B cell (primary cell): ENCODE measurements at regions of chr19 and their contacts with region 1.

Region 1: GRCh38 chr19:46840136-46840942 is 10.3 kb downstream of the AP2S1 start:
- DNase-seq: peak; percentile 82
- ATAC-seq: peak; percentile 95
- H3K4me3 ChIP-seq: no peak overlapping the region
- H3K4me3 Mint-ChIP-seq: no peak overlapping the region
- H3K27ac ChIP-seq: no peak overlapping the region
- H3K27ac Mint-ChIP-seq: no peak overlapping the region
- H3K4me1 ChIP-seq: peaks cover 0 to 6% of the 10 kb centered on the region in 2 donors
- H3K4me1 Mint-ChIP-seq: peaks cover 3% of the 10 kb centered on the region
- H3K27me3 ChIP-seq: no peaks in the 10 kb centered on the region
- H3K27me3 Mint-ChIP-seq: no peaks in the 10 kb centered on the region
- CTCF ChIP-seq: peak; percentile 85

Region 2: GRCh38 chr19:46536391-46536790 is 303.9 kb before region 1 on chr19:
- CTCF ChIA-PET with region 1: no interaction called
- POLR2A ChIA-PET with region 1: no interaction called
- intact Hi-C with region 1: no loop called
- DNase-seq: no peak
- ATAC-seq: no peak
- H3K4me3 ChIP-seq: no peak overlapping the region
- H3K4me3 Mint-ChIP-seq: no peak overlapping the region
- H3K27ac ChIP-seq: no peak overlapping the region
- H3K27ac Mint-ChIP-seq: no peak overlapping the region
- H3K4me1 ChIP-seq: no peaks in the 10 kb centered on the region
- H3K4me1 Mint-ChIP-seq: no peaks in the 10 kb centered on the region
- H3K27me3 ChIP-seq: peaks cover 0 to 4% (median 0%) of the 10 kb centered on the region in 4 experiments
- H3K27me3 Mint-ChIP-seq: peaks cover 4% of the 10 kb centered on the region
- CTCF ChIP-seq: no peak

Region 3: GRCh38 chr19:46704379-46705076 is 135.8 kb before region 1 on chr19:
- CTCF ChIA-PET with region 1: interaction called, 18 read pairs
- POLR2A ChIA-PET with region 1: no interaction called
- intact Hi-C with region 1: no loop called
- DNase-seq: peak; percentile 85
- ATAC-seq: peak; percentile 93
- H3K4me3 ChIP-seq: no peak overlapping the region
- H3K4me3 Mint-ChIP-seq: no peak overlapping the region
- H3K27ac ChIP-seq: peak overlapping the region in 1 of 2 donors; percentile 48
- H3K27ac Mint-ChIP-seq: peak overlapping the region; percentile 87
- H3K4me1 ChIP-seq: peaks cover 3 to 8% of the 10 kb centered on the region in 2 donors
- H3K4me1 Mint-ChIP-seq: peaks cover 13% of the 10 kb centered on the region
- H3K27me3 ChIP-seq: no peaks in the 10 kb centered on the region
- H3K27me3 Mint-ChIP-seq: no peaks in the 10 kb centered on the region
- CTCF ChIP-seq: peak; percentile 93

Region 4: DNA sequence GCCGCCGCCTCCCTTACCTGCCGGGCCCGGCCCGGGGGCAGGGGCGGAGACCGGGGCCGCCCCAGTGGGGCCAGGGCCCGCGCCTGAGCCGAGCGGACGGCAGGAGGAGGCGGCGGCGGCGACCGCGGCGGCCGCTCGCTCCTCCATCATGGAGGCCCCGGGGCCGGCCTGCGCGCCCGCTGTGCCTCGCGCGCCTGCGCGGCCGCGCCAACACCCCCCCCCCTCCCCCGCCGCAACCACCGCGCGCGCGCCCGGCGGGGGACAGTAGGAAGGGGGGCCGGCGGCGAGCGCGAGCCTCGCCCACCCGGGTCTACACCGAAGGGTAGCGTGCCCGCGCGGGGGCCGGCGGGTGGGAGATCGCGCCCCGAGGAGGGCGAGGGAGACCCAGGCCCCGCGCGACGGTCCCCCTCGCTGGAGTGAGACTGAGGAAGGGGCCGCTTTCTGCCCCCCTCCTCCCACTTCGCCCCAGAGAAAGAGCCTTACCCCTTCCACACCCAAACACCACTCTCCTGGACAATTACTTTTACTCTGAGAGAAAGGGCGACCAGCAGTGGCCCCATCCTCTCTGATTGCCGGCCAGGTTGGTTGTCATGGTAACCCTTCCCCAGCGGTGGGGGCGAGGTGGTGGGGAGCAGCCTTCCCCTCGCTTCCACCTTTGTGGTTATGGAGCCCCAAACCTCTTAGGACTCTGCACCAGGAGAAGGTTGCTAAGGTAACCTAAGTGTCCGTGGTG is 93.9 kb before region 1 on chr19 and contains the start of gene STRN4:
- CTCF ChIA-PET with region 1: interaction called, 51 read pairs
- POLR2A ChIA-PET with region 1: no interaction called
- intact Hi-C with region 1: no loop called
- DNase-seq: peak; percentile 82
- ATAC-seq: peak; percentile 78
- H3K4me3 ChIP-seq: peak within 1 kb of the TSS; percentile 51 to 87 (median 84)
- H3K4me3 Mint-ChIP-seq: peak within 1 kb of the TSS; percentile 93
- H3K27ac ChIP-seq: peak within 1 kb of the TSS; percentile 43 to 77
- H3K27ac Mint-ChIP-seq: peak within 1 kb of the TSS; percentile 85
- H3K4me1 ChIP-seq: peaks cover 15 to 43% of the 10 kb centered on the region in 2 donors
- H3K4me1 Mint-ChIP-seq: peaks cover 58% of the 10 kb centered on the region
- H3K27me3 ChIP-seq: no peaks in the 10 kb centered on the region
- H3K27me3 Mint-ChIP-seq: no peaks in the 10 kb centered on the region
- CTCF ChIP-seq: no peak
- total RNA-seq, gene STRN4: 102 and 112 TPM in 2 replicates

Region 5: GRCh38 chr19:46766569-46767317 is 73.6 kb before region 1 on chr19:
- CTCF ChIA-PET with region 1: interaction called, 54 read pairs
- POLR2A ChIA-PET with region 1: interaction called, 6 read pairs
- intact Hi-C with region 1: no loop called
- DNase-seq: peak; percentile 67
- ATAC-seq: peak; percentile 64
- H3K4me3 ChIP-seq: no peak overlapping the region
- H3K4me3 Mint-ChIP-seq: no peak overlapping the region
- H3K27ac ChIP-seq: no peak overlapping the region
- H3K27ac Mint-ChIP-seq: no peak overlapping the region
- H3K4me1 ChIP-seq: no peaks in the 10 kb centered on the region
- H3K4me1 Mint-ChIP-seq: peaks cover 2% of the 10 kb centered on the region
- H3K27me3 ChIP-seq: no peaks in the 10 kb centered on the region
- H3K27me3 Mint-ChIP-seq: no peaks in the 10 kb centered on the region
- CTCF ChIP-seq: peak; percentile 72

Region 6: DNA sequence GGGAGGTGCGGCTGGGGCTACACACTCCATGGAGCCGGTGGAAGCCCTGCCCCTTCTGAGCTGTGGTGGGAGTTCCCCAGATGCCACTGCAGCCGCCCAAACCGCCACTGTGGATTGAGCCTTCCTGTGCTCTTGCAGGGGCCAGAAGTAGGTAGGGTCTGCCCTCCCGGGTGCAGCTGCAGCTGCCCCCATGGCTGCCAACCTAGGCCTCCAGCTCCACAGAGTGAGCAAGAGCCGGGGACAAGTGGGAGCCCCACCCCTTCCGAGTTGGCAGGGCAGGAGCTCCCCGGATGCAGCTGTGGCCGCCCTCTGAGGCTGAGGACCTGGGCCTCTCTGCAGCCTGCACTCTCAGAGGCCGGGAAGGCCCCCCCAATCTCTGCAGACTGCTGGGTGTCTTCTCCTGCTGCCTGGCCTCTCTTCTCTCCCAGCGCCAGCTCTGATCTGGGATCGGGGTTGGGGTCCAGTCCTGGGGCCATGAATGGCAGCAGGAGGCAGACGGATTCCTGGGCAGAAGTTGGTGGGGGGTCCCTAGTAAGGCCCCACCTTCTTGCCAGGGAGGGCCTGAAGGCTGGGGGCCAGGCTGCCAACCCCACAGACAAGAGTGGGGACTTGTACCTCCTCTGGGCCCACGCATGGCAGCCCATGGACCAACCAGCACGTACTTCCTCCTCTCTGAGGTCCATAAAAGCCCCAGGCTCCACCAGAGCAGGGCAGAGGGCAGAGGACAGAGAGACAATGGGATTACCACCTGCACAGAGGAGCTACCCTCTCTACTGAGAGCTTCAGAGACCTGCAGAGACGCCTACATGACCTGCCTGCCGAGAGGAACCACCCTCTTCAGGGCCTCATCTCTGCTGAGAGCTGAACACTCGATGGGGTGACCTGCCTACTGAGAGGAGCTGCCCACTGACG is 18.6 kb before region 1 on chr19:
- CTCF ChIA-PET with region 1: interaction called, 56 read pairs
- POLR2A ChIA-PET with region 1: interaction called, 8 read pairs
- intact Hi-C with region 1: loop called (anchors 2 kb)
- DNase-seq: peak; percentile 85
- ATAC-seq: peak; percentile 66
- H3K4me3 ChIP-seq: peak overlapping the region in 3 of 5 experiments; percentile 23 to 51 (median 29)
- H3K4me3 Mint-ChIP-seq: peak overlapping the region; percentile 69
- H3K27ac ChIP-seq: peak overlapping the region; percentile 79
- H3K27ac Mint-ChIP-seq: peak overlapping the region; percentile 92
- H3K4me1 ChIP-seq: peaks cover 60 to 73% of the 10 kb centered on the region in 2 donors
- H3K4me1 Mint-ChIP-seq: peaks cover 52% of the 10 kb centered on the region
- H3K27me3 ChIP-seq: no peaks in the 10 kb centered on the region
- H3K27me3 Mint-ChIP-seq: no peaks in the 10 kb centered on the region
- CTCF ChIP-seq: no peak

Region 7: DNA sequence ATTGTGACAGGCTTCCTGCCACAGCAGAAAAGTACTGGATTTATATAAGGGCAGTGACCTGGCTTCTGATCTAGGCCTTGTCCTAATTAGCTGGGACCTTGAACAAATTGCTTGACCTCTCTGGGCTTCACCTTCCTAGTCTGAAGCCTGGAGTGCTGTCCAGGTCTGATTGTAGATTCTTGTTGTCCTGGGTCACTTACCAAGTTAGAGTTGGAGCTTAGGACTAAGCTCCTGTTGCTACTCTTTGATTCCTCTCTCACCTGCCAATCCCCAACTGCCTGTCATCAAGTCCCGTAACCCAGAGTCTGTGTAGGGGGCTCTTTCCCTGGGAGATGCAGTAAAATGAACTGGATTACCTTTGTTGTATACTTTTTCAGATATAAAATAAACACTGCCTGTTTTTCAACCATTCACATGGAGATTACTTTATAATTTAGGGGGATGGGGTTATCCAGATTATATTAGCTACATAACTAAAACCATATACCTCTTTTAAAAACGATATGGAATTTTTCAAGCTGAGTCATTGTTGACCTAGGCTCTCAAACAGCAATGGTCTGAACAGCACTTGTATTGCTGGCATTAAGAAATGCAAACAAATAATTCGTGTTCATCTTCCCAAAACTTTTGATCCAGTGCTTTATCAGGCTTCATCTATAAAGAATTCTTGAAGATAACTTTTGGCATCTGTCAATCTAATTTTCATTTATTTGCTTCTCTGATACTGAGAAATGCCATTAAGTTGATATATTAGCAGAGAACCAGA is 26.2 kb after region 1 on chr19:
- CTCF ChIA-PET with region 1: no interaction called
- POLR2A ChIA-PET with region 1: no interaction called
- intact Hi-C with region 1: no loop called
- DNase-seq: no peak
- ATAC-seq: no peak
- H3K4me3 ChIP-seq: no peak overlapping the region
- H3K4me3 Mint-ChIP-seq: no peak overlapping the region
- H3K27ac ChIP-seq: no peak overlapping the region
- H3K27ac Mint-ChIP-seq: peak overlapping the region; percentile 22
- H3K4me1 ChIP-seq: peaks cover 19 to 25% of the 10 kb centered on the region in 2 donors
- H3K4me1 Mint-ChIP-seq: peaks cover 29% of the 10 kb centered on the region
- H3K27me3 ChIP-seq: no peaks in the 10 kb centered on the region
- H3K27me3 Mint-ChIP-seq: no peaks in the 10 kb centered on the region
- CTCF ChIP-seq: no peak

Region 8: DNA sequence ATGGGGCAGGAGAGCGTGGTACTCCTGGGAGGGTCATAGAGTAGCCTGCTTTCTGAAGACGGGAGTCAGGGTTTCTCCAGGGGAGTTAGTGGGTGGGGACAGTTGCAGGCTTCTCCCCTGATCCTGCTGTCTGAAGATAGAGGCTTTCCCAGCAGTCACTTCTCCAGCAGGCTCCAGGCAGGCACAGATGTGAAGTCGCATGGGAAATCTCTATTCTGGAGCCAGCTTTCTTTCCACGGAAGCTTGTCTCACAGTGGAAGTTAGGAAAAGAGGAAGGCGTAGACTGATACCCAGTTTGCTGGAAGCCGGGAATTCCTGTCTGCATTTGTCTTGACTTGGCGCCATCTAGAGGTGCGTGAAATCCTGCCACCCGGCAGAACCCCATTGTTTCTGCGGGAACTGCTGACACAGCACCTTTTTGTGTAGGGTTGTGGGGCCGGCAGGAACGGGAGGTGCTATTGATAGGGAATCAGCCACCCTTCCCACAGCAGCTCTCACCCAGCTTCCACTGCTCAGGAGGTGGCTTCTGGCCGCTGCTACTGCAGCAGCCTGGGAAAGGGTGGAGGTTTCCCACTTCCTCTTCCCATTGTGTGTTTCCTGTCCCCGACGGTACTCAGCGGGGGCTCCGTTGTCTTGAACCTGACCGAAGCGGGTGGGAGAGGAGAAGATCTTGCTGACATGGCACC is 150.8 kb after region 1 on chr19:
- CTCF ChIA-PET with region 1: interaction called, 13 read pairs
- POLR2A ChIA-PET with region 1: no interaction called
- intact Hi-C with region 1: no loop called
- DNase-seq: peak; percentile 51
- ATAC-seq: no peak
- H3K4me3 ChIP-seq: no peak overlapping the region
- H3K4me3 Mint-ChIP-seq: no peak overlapping the region
- H3K27ac ChIP-seq: no peak overlapping the region
- H3K27ac Mint-ChIP-seq: no peak overlapping the region
- H3K4me1 ChIP-seq: peaks cover 6 to 8% of the 10 kb centered on the region in 2 donors
- H3K4me1 Mint-ChIP-seq: peaks cover 10% of the 10 kb centered on the region
- H3K27me3 ChIP-seq: no peaks in the 10 kb centered on the region
- H3K27me3 Mint-ChIP-seq: no peaks in the 10 kb centered on the region
- CTCF ChIP-seq: peak; percentile 61